Vagina (tissue), 2 donors: ENCODE measurements at regions of chr1 and their contacts with region 1.

Region 1: GRCh38 chr1:227762233-227762911 is 27.1 kb downstream of the SNAP47 start:
- DNase-seq: no peak
- H3K4me3 ChIP-seq: no peak overlapping the region
- H3K27ac ChIP-seq: peak overlapping the region; percentile 63
- H3K4me1 ChIP-seq: peaks cover 35% of the 10 kb centered on the region
- H3K27me3 ChIP-seq: no peaks in the 10 kb centered on the region
- CTCF ChIP-seq: peak; percentile 53 to 94 (median 90)
- POLR2A ChIP-seq: no peak

Region 2: DNA sequence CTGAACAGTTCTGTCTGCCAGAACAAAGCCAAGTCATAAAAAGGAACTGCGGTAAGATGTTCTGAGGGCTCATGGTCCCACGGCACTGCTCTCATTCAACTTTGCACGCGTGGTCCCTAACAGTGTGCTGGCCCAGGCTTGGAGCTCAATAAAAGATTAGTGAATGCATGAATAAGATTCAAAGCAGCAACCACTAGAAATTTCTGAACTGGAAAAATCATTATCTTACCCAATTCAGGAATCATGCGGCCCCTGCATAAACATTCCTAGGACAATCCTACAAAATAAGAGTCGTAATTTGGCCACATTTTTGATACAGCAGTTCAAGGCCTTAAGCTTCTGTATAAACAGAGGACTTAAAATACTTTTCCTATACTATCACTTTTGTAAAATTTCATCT is 431.7 kb before region 1 on chr1:
- intact Hi-C with region 1: no loop called
- DNase-seq: no peak
- H3K4me3 ChIP-seq: no peak overlapping the region
- H3K27ac ChIP-seq: no peak overlapping the region
- H3K4me1 ChIP-seq: no peaks in the 10 kb centered on the region
- H3K27me3 ChIP-seq: no peaks in the 10 kb centered on the region
- CTCF ChIP-seq: no peak
- POLR2A ChIP-seq: no peak

Region 3: DNA sequence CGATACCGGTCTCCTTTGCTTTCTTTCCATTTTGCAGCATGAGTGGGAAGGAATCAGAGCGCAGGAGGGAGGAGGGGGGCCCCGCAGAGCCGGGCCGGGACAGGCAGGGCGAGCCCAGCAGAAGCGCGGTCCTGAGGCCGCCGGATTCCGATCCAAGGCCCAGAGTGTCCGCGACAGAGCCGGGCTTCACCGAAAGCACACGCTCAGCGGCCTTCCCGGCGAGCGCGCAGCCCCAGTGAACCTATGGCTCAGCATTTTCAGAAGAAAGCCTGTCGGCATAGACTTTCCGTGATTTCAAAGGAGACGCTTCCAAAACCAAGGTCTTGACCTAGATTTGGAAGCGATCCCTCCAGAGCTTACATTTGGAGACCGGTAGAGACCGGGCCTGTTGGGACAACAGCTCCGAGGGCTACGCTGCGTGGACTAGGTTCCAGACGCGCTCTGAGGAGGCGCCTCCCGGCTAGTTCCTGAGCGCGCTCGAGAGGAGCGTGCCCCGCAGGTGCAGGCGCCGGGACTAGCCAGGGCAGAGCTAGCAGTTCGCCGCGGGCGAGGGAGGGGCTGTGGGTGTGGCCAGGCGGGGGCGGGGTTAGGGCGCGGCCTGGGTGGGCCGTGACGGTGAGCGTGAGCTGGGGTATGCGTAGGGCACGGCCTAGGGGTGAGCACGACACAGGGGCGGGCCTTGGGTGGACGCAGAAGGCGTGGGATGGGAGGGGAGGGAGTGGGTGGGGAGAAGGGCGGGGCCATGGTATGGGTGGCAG is 25.3 kb after region 1 on chr1:
- intact Hi-C with region 1: loop called (anchors 1 kb)
- DNase-seq: peak; percentile 94 to 96
- H3K4me3 ChIP-seq: peak overlapping the region; percentile 58 to 68
- H3K27ac ChIP-seq: peak overlapping the region; percentile 69
- H3K4me1 ChIP-seq: peaks cover 32% of the 10 kb centered on the region
- H3K27me3 ChIP-seq: no peaks in the 10 kb centered on the region
- CTCF ChIP-seq: no peak
- POLR2A ChIP-seq: peak in 1 of 2 donors; percentile 11

Region 4: DNA sequence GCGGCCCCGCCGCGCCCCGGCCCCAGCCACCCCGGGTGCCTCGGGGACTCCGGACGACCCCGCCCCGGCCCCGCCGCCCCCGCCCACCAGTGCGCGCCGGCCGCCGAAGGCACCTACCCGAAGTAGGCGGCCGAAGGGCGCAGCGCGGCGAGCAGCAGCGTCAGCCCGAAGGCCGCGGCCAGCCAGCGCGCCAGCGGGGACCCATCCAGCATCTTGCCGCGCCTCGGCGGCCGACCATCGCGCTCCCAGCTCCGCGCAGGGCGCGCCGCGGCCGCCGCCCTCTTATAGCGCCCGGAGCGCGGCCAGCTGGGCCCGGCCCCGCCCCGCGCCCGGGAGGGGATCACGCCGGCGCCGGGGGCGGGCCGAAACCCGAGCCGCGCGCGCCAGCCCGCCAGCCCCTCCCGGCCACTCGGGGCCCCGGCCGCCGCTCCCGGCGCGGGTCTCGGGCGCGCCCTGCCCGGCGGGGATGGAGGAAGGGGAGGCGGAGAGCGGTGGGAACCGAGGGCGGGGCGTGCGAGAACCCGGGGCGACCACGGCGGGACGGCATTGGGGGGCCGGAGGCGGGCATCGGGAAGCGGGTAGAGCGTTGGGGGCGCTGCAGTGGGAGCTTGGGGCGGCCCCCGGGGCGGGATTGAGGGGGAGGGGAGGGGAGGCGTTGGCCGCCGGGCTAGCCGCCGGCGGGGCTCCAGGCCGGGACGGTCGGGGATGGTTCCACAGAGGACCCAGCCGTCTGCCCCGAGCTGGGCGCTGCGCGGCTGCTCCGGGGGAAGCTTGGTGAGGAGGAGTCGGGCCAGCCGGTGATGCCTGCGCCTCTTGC is 185.5 kb after region 1 on chr1 and contains the start of gene WNT9A:
- intact Hi-C with region 1: loop called (anchors 2 kb)
- DNase-seq: peak in 1 of 2 donors; percentile 82
- H3K4me3 ChIP-seq: peak within 1 kb of the TSS; percentile 64 to 80
- H3K27ac ChIP-seq: peak within 1 kb of the TSS; percentile 77
- H3K4me1 ChIP-seq: peaks cover 46% of the 10 kb centered on the region
- H3K27me3 ChIP-seq: no peaks in the 10 kb centered on the region
- CTCF ChIP-seq: no peak
- POLR2A ChIP-seq: peak in 1 of 2 donors; percentile 28
- total RNA-seq, gene WNT9A: 2.9 TPM